ENCODE measurements at regions of chr6 and their contacts with region 1.

Region 1: DNA sequence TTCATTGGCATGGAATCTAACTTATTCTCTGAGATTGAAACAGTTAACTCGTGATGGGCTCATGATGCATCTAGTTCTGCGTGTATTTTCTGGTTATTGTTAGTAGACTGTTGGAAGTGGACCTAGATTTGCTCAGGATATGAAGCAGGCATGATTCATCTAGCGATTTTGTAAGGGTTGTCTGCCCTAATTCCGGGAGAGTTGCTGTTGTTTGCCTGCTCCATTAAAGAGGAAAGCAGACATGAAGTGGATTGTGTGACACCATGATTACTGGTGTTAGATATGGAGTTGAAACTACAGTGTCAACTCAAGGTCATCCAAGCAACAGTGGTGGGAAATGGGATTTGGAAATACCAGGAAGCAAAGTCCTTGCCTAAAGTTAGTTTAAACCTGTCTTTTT is 41.0 kb downstream of the SOX4 start:
- DNase-seq: peak in 1 of 2 experiments; percentile 62
- H3K4me3 ChIP-seq: no peak overlapping the region
- H3K27ac ChIP-seq: peak overlapping the region; percentile 24
- H3K4me1 ChIP-seq: peaks cover 13% of the 10 kb centered on the region; the same call in 1 of the 2 replicates
- H3K27me3 ChIP-seq: no peaks in the 10 kb centered on the region
- CTCF ChIP-seq: no peak

Region 2: DNA sequence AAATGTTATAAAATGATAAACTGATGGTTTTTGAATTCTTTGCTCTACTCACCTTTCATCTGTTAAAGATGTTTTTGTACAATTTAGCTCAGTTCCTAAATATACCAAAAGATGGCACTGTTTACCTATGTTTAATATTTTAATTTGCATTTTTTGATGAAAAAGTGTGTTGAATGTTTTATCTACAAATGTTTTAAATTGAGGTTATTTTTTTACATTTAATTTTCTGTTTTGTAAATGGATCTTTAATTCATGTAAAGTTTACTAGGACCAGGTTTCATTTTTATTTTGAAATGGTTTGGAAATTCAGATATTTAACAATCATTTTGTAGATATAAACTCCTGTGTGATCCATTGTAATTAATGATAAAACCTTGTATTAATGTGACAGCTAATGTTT is 1070.3 kb before region 1 on chr6:
- CTCF ChIA-PET with region 1: no interaction called
- POLR2A ChIA-PET with region 1: interaction called, 10 read pairs
- intact Hi-C with region 1: no loop called
- DNase-seq: no peak
- H3K4me3 ChIP-seq: no peak overlapping the region
- H3K27ac ChIP-seq: no peak overlapping the region
- H3K4me1 ChIP-seq: no peaks in the 10 kb centered on the region
- H3K27me3 ChIP-seq: no peaks in the 10 kb centered on the region
- CTCF ChIP-seq: peak; percentile 79

Region 3: GRCh38 chr6:21538186-21538798 is 96.3 kb before region 1 on chr6:
- CTCF ChIA-PET with region 1: no interaction called
- POLR2A ChIA-PET with region 1: no interaction called
- intact Hi-C with region 1: no loop called
- DNase-seq: no peak
- H3K4me3 ChIP-seq: no peak overlapping the region
- H3K27ac ChIP-seq: no peak overlapping the region
- H3K4me1 ChIP-seq: no peaks in the 10 kb centered on the region
- H3K27me3 ChIP-seq: no peaks in the 10 kb centered on the region
- CTCF ChIP-seq: no peak

Region 4: DNA sequence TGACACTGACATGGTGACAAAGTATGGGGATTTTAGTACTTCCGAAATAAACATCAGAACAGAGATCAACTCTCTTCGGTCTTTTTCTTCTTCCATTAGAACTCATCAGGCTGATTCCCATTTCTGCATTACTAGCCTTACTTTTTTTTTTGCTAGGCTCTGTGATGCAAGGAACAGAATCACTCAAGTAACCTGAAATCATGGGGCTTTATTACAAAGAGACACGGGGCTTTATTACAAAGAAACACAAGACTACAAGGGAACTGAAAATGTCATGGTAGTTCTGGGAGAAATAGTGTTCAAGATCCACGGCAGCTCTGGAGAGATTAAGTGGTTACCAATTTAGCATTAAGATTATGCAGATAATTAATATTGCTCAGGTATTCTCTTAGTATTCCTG is 29.4 kb before region 1 on chr6:
- CTCF ChIA-PET with region 1: interaction called, 12 read pairs
- POLR2A ChIA-PET with region 1: no interaction called
- intact Hi-C with region 1: no loop called
- DNase-seq: no peak
- H3K4me3 ChIP-seq: no peak overlapping the region
- H3K27ac ChIP-seq: no peak overlapping the region
- H3K4me1 ChIP-seq: no peaks in the 10 kb centered on the region
- H3K27me3 ChIP-seq: no peaks in the 10 kb centered on the region
- CTCF ChIP-seq: no peak